Caco-2 (cell line): ENCODE measurements at regions of chr12 and their contacts with region 1.

Region 1: GRCh38 chr12:76586764-76587395 is 27.3 kb upstream of the OSBPL8 start:
- DNase-seq: peak in 1 of 2 experiments; percentile 33
- H3K4me3 ChIP-seq: no peak overlapping the region
- H3K4me3 Mint-ChIP-seq: no peak overlapping the region
- H3K27ac Mint-ChIP-seq: no peak overlapping the region
- H3K4me1 ChIP-seq: 0 out of 2 replicates have a peak, but pooled peaks cover 4% of the 10 kb centered on the region
- H3K4me1 Mint-ChIP-seq: peaks cover 6% of the 10 kb centered on the region
- H3K27me3 ChIP-seq: no peaks in the 10 kb centered on the region
- H3K27me3 Mint-ChIP-seq: no peaks in the 10 kb centered on the region
- CTCF ChIP-seq: peak; percentile 57 to 66

Region 2: DNA sequence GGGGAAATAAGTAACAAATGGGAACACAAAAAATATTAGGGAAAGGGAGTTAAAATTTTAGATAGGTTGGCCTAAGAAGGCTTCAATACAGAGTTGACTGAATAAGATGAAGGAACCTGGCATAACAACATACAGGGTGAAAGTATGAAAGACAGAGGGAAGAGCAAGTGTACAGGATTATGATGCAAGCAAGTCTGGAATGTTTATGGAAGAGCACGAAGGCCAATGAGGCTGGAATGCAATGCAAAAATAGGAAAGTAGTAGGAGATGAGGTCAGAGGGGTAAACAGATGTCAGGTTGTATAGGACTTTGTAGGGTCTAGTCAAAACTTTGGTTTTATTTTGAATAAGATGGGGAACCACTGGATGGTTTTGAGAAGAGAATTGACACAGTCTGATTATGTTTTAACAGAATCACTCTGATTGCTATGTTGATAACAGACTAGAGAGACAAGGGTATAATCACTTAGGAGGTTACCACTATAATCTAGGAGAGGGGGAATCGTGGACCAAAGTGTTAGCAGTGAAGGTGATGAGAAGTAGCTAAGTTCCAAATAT is 124.1 kb before region 1 on chr12:
- CTCF ChIA-PET with region 1: no interaction called
- POLR2A ChIA-PET with region 1: no interaction called
- intact Hi-C with region 1: loop called (anchors 5 kb)
- DNase-seq: no peak
- H3K4me3 ChIP-seq: no peak overlapping the region
- H3K4me3 Mint-ChIP-seq: no peak overlapping the region
- H3K27ac Mint-ChIP-seq: no peak overlapping the region
- H3K4me1 ChIP-seq: no peaks in the 10 kb centered on the region
- H3K4me1 Mint-ChIP-seq: peaks cover 12% of the 10 kb centered on the region
- H3K27me3 ChIP-seq: no peaks in the 10 kb centered on the region
- H3K27me3 Mint-ChIP-seq: no peaks in the 10 kb centered on the region
- CTCF ChIP-seq: no peak

Region 3: DNA sequence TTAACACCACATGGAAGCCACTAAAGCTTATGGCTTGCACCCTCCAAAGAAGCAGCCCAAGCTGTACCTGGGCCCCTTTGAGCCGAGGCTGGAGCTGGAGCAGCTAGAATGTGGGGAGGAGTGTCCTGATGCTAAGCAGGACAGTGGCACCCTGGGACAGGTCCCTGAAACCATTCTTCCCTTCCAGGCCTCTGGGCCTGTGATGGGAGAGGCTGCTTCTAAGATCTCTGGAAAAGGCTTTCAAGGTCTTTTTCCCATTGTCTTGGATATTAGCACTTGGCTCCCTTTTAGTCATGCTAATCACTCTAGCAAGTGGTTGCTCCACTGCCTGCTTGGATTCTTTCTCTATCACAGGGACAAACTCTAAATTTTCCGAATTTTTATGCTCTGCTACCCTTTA is 68.2 kb before region 1 on chr12:
- CTCF ChIA-PET with region 1: interaction called, 3 read pairs
- POLR2A ChIA-PET with region 1: no interaction called
- intact Hi-C with region 1: loop called (anchors 1 kb)
- DNase-seq: no peak
- H3K4me3 ChIP-seq: no peak overlapping the region
- H3K4me3 Mint-ChIP-seq: no peak overlapping the region
- H3K27ac Mint-ChIP-seq: no peak overlapping the region
- H3K4me1 ChIP-seq: no peaks in the 10 kb centered on the region
- H3K4me1 Mint-ChIP-seq: no peaks in the 10 kb centered on the region
- H3K27me3 ChIP-seq: no peaks in the 10 kb centered on the region
- H3K27me3 Mint-ChIP-seq: no peaks in the 10 kb centered on the region
- CTCF ChIP-seq: no peak

Region 4: DNA sequence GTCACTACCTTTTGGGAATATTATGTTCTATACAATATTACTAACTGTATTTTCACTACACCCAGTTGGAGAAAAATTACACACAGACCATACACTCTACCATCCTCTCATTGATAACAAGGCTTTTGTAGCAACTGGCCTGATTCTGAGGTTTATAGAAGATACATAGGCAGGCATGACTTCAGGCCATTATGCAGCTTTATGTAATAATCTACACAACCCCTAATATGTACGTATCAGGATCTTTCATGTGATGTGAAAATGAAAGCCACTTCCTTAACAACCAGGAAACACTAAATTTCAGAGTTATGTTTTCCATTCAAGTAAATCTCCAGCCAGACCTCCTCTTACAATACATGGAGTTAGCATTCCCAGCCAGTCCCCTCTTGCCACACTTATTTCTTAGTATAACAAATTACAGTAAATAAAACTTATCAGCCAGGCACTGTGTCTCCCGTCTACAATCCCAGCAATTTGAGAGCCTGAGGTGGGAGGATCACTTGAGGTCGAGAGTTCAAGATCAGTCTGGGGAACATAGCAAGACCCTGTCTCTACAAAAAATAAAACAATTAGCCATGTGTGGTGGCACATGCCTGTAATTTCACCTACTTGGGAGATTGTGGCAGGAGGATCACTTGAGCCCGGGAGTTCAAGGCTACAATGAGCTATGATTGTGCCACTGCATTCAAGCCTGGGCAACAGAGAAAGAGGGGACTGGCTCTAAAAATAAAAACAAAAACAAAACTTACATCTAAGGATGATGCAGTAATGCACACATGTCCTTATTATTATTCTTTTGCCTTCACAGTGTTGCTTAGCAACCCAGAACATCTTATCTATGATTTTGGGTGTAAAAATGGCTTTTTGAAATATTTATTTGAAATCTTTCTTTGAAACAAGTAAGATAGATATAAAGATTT is 16.9 kb before region 1 on chr12:
- CTCF ChIA-PET with region 1: no interaction called
- POLR2A ChIA-PET with region 1: no interaction called
- intact Hi-C with region 1: no loop called
- DNase-seq: no peak
- H3K4me3 ChIP-seq: no peak overlapping the region
- H3K4me3 Mint-ChIP-seq: no peak overlapping the region
- H3K27ac Mint-ChIP-seq: no peak overlapping the region
- H3K4me1 ChIP-seq: no peaks in the 10 kb centered on the region
- H3K4me1 Mint-ChIP-seq: peaks cover 8% of the 10 kb centered on the region
- H3K27me3 ChIP-seq: no peaks in the 10 kb centered on the region
- H3K27me3 Mint-ChIP-seq: no peaks in the 10 kb centered on the region
- CTCF ChIP-seq: no peak